ENCODE measurements at regions of chr3 and their contacts with region 1.

Region 1: DNA sequence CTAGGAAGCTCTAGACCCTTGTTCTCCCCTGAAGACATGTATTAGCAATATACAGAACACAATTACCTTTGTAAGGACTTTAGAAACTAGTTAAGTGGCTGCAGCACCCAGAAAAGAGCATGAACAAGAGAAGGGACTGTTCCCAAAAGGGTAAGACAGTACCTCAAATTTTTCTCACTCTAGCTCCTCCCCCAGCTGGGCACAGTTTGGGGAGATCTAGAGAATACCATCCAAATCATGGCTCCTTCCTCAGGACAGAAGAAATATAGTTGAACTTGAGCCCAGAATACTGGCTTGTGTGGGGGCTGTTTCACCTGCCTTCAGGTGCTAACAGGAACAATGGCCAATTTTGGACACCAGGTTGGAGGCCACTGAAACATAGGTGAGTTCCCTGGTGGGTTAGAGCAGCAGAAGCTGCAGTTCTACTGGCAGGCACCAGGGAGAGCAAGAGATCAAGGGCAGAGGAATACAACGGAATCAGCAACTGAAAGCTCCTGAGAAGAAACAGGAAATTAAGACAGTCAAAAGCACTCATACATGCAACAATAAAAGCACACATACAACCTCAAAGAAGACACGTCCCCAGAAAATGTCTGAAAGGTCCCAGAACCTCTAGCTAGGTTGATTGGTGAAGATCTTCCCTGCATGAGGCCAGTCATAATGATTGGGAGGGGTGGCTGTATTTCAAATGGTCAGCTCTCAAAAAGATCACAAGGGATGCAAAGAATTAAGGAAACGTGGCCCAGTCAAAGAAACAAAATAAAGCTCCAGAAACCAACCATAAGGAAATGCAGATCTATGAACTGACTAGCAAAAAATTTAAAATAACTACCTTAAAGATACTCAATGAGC is 104.9 kb upstream of the ASB14 start:
- DNase-seq: peak; percentile 60
- ATAC-seq: peak; percentile 99
- H3K4me3 ChIP-seq: peak overlapping the region in 2 of 3 experiments; percentile 39 to 61; a peak in 3 of 6 replicates
- H3K27ac ChIP-seq: no peak overlapping the region
- H3K4me1 ChIP-seq: peaks cover under 1% of the 10 kb centered on the region; the same call in 1 of the 2 replicates
- H3K27me3 ChIP-seq: no peaks in the 10 kb centered on the region
- CTCF ChIP-seq: peak; percentile 94
- EP300 ChIP-seq: no peak
- POLR2A ChIP-seq: no peak
- RAD21 ChIP-seq: peak; percentile 79

Region 2: GRCh38 chr3:57434041-57434440 is 36.6 kb after region 1 on chr3:
- CTCF ChIA-PET with region 1: interaction called, 8 read pairs
- POLR2A ChIA-PET with region 1: no interaction called
- in situ Hi-C with region 1: no loop called
- intact Hi-C with region 1: loop called (anchors 1 kb)
- DNase-seq: peak; percentile 69
- ATAC-seq: peak; percentile 66
- H3K4me3 ChIP-seq: no peak overlapping the region
- H3K27ac ChIP-seq: no peak overlapping the region
- H3K4me1 ChIP-seq: peaks cover 34% of the 10 kb centered on the region
- H3K27me3 ChIP-seq: no peaks in the 10 kb centered on the region
- CTCF ChIP-seq: peak; percentile 39
- EP300 ChIP-seq: no peak
- POLR2A ChIP-seq: no peak
- RAD21 ChIP-seq: peak; percentile 30; the same call in 1 of the 2 replicates

Region 3: DNA sequence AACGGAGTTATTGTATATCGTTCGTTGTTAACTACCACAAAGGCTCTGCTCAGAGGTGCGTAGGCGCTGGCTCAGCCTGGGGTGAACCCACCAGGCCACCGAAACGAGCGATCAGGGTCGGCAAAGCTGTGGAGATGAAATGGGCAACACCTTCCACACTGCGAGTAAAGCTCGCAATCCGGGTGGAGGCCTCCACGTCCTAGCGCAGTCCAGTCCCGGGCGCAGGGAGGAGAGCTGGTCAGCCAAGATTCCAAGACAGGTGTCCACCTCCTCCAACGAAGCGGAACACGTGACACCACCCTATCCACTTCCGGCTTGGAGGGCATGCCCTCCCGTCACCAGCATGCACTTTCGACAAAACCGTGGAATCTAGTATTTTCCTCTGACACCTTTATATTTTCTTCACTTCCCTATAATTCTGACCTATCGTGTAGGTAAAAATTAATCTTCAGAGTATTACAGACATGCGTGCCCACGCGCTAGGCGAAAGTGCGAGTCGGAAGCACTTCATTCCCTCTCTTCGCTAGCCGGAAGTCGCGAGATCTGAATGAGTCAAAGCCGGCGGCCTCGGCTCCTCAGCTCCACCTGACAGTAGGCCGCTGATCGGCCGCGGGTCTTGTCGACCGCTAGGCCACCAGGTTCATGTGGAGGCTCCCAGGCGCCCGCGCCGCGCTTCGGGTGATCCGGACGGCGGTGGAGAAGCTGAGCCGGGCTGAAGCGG is 158.5 kb after region 1 on chr3 and contains the start of gene PDE12:
- CTCF ChIA-PET with region 1: no interaction called
- POLR2A ChIA-PET with region 1: interaction called, 11 read pairs
- in situ Hi-C with region 1: loop called (anchors 10 kb)
- intact Hi-C with region 1: loop called (anchors 2 kb)
- DNase-seq: peak; percentile 88
- ATAC-seq: peak; percentile 91
- H3K4me3 ChIP-seq: peak within 1 kb of the TSS; percentile 78 to 82 (median 80)
- H3K27ac ChIP-seq: peak within 1 kb of the TSS; percentile 92
- H3K4me1 ChIP-seq: peaks cover 36% of the 10 kb centered on the region
- H3K27me3 ChIP-seq: no peaks in the 10 kb centered on the region; a peak in 1 of 5 replicates
- CTCF ChIP-seq: peak; percentile 23; the same call in 1 of the 2 replicates
- EP300 ChIP-seq: peak in 1 of 2 experiments; percentile 82; a peak in 2 of 4 replicates
- POLR2A ChIP-seq: peak; percentile 93 to 95
- RAD21 ChIP-seq: peak; percentile 34; the same call in 1 of the 2 replicates
- total RNA-seq, gene PDE12: 17.8 and 20.6 TPM in 2 replicates

Region 4: GRCh38 chr3:57582474-57583168 is 185.2 kb after region 1 on chr3:
- CTCF ChIA-PET with region 1: no interaction called
- POLR2A ChIA-PET with region 1: no interaction called
- in situ Hi-C with region 1: no loop called
- intact Hi-C with region 1: loop called (anchors 2 kb)
- DNase-seq: no peak
- ATAC-seq: peak; percentile 65
- H3K4me3 ChIP-seq: no peak overlapping the region
- H3K27ac ChIP-seq: no peak overlapping the region
- H3K4me1 ChIP-seq: no peaks in the 10 kb centered on the region
- H3K27me3 ChIP-seq: no peaks in the 10 kb centered on the region
- CTCF ChIP-seq: peak; percentile 26; the same call in 1 of the 2 replicates
- EP300 ChIP-seq: no peak
- POLR2A ChIP-seq: no peak
- RAD21 ChIP-seq: no peak

Region 5: GRCh38 chr3:57852896-57853295 is 455.5 kb after region 1 on chr3:
- CTCF ChIA-PET with region 1: no interaction called
- POLR2A ChIA-PET with region 1: no interaction called
- in situ Hi-C with region 1: loop called (anchors 25 kb)
- intact Hi-C with region 1: no loop called
- DNase-seq: peak; percentile 9
- ATAC-seq: no peak
- H3K4me3 ChIP-seq: no peak overlapping the region
- H3K27ac ChIP-seq: no peak overlapping the region
- H3K4me1 ChIP-seq: peaks cover 4% of the 10 kb centered on the region
- H3K27me3 ChIP-seq: no peaks in the 10 kb centered on the region
- CTCF ChIP-seq: peak; percentile 22; the same call in 1 of the 2 replicates
- EP300 ChIP-seq: no peak
- POLR2A ChIP-seq: no peak
- RAD21 ChIP-seq: no peak